CD4-positive, alpha-beta memory T cell (primary cell): ENCODE measurements at regions of chr11 and their contacts with region 1.

Region 1: GRCh38 chr11:64448599-64449556 is 89.9 kb downstream of the RPS6KA4 start:
- DNase-seq: peak; percentile 52 to 68 (median 57)
- H3K4me3 ChIP-seq: peak overlapping the region; percentile 34 to 57
- H3K4me3 Mint-ChIP-seq: peak overlapping the region; percentile 80 to 97 (median 86)
- H3K27ac ChIP-seq: no peak overlapping the region
- H3K27ac Mint-ChIP-seq: peak overlapping the region in 5 of 7 donors; percentile 41 to 75 (median 56)
- H3K4me1 ChIP-seq: peaks cover 18% of the 10 kb centered on the region
- H3K4me1 Mint-ChIP-seq: peaks cover 7 to 18% (median 10%) of the 10 kb centered on the region in 4 donors
- H3K27me3 ChIP-seq: peaks cover 5% of the 10 kb centered on the region
- H3K27me3 Mint-ChIP-seq: peaks cover 6 to 17% of the 10 kb centered on the region in 2 donors

Region 2: DNA sequence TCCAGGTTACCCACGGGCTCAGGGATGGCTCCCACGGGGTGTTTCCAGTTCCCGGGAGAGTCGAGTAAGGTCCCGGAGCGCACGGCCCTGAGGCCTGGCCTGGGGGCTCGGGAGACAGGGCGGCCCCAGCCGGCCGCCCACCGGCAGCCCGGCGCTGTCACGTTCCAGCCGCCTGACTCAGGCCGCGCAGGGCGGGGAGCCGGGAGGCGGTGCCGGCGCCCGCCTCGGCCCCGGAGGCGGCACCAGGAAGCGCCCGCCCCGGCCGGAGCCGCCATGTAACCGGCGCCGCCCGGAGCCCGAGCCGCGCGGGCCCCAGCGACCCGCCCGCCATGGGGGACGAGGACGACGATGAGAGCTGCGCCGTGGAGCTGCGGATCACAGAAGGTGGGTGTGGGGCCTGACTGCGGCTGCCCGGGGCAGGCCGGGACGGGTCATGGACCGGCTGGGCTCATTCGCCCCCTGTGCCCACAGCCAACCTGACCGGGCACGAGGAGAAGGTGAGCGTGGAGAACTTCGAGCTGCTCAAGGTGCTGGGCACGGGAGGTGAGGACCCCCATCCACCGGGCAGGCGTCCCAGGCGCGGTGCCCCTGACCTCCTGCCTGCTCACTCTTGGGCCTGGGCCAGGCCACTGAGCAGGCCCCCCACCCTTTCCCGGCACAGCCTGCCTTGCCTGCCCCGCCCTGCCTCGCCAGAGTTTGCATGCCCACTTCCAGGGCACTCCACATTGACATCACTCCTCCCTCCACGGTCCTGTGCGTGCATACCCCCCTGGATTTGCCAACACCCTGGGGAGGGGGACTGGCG is 89.8 kb before region 1 on chr11 and contains the start of gene RPS6KA4:
- CTCF ChIA-PET with region 1: interaction called, 14 read pairs
- POLR2A ChIA-PET with region 1: interaction called, 4 read pairs
- intact Hi-C with region 1: no loop called
- DNase-seq: peak in 3 of 5 donors; percentile 36 to 53 (median 50)
- H3K4me3 ChIP-seq: peak within 1 kb of the TSS; percentile 47 to 53
- H3K4me3 Mint-ChIP-seq: peak within 1 kb of the TSS; percentile 89 to 96 (median 94)
- H3K27ac ChIP-seq: peak within 1 kb of the TSS; percentile 62
- H3K27ac Mint-ChIP-seq: peak within 1 kb of the TSS; percentile 65 to 95 (median 80)
- H3K4me1 ChIP-seq: peaks cover 30% of the 10 kb centered on the region
- H3K4me1 Mint-ChIP-seq: peaks cover 17 to 45% (median 23%) of the 10 kb centered on the region in 4 donors
- H3K27me3 ChIP-seq: no peaks in the 10 kb centered on the region
- H3K27me3 Mint-ChIP-seq: no peaks in the 10 kb centered on the region
- total RNA-seq, gene RPS6KA4: 33.9 to 38.7 TPM

Region 3: GRCh38 chr11:64436000-64436399 is 12.9 kb before region 1 on chr11:
- CTCF ChIA-PET with region 1: interaction called, 11 read pairs
- POLR2A ChIA-PET with region 1: no interaction called
- intact Hi-C with region 1: no loop called
- DNase-seq: no peak
- H3K4me3 ChIP-seq: no peak overlapping the region
- H3K4me3 Mint-ChIP-seq: no peak overlapping the region
- H3K27ac ChIP-seq: no peak overlapping the region
- H3K27ac Mint-ChIP-seq: no peak overlapping the region
- H3K4me1 ChIP-seq: no peaks in the 10 kb centered on the region
- H3K4me1 Mint-ChIP-seq: no peaks in the 10 kb centered on the region
- H3K27me3 ChIP-seq: no peaks in the 10 kb centered on the region
- H3K27me3 Mint-ChIP-seq: peaks cover 9 to 13% of the 10 kb centered on the region in 2 donors

Region 4: DNA sequence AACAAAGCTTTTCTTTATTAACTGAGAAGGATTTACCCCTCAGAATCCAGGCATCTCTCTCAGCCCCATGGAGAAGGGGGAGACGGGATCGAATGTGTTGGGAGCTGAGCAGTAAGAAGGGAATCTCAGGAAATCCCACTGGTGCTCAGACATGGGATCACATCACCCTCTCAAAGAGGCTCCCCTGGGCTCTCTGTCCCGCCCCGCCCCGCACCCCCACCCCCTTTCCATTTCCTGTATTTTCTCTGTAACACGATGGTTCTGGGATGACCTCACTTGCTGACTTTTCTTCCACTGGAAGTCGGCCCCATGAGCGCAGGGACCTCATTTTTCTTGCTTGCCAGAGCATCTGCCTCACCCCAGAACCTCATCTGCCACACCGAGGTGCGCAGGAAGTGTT is 10.1 kb after region 1 on chr11:
- CTCF ChIA-PET with region 1: interaction called, 20 read pairs
- POLR2A ChIA-PET with region 1: interaction called, 3 read pairs
- intact Hi-C with region 1: no loop called
- DNase-seq: no peak
- H3K4me3 ChIP-seq: no peak overlapping the region
- H3K4me3 Mint-ChIP-seq: no peak overlapping the region
- H3K27ac ChIP-seq: no peak overlapping the region
- H3K27ac Mint-ChIP-seq: no peak overlapping the region
- H3K4me1 ChIP-seq: no peaks in the 10 kb centered on the region
- H3K4me1 Mint-ChIP-seq: no peaks in the 10 kb centered on the region
- H3K27me3 ChIP-seq: no peaks in the 10 kb centered on the region
- H3K27me3 Mint-ChIP-seq: no peaks in the 10 kb centered on the region

Region 5: DNA sequence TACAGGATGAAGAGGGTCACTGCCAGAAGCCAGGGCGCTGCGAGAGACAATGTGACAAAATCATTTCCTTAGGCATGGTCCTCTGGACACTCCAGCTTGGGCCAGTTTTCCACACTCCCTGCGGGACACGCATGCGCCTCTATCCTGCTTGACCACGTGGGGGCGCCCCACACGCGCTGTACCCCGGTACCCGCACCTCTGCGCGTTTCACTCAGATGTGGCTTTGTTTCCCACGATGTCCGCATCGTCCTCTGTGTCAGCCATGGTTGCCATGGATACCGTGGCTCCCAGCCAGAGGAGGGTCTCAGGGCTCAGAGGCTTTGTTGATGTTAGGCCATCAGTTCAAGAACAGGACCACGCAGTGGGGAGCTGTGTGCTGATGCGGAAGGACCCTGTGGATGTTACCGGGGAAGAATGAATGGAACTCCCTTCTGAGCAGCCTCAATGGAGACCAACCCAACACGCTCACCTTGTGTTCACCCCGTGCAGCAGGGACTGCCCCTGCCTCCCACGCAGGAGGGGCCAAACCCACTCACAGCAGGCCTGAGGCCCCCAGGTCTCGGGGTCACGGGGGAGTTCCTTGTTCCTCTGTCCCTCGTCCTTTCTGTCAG is 41.1 kb after region 1 on chr11:
- CTCF ChIA-PET with region 1: interaction called, 12 read pairs
- POLR2A ChIA-PET with region 1: no interaction called
- intact Hi-C with region 1: no loop called
- DNase-seq: peak in 4 of 5 donors; percentile 5 to 31 (median 15)
- H3K4me3 ChIP-seq: no peak overlapping the region
- H3K4me3 Mint-ChIP-seq: peak overlapping the region in 3 of 8 donors; percentile 7 to 63 (median 12)
- H3K27ac ChIP-seq: no peak overlapping the region
- H3K27ac Mint-ChIP-seq: no peak overlapping the region
- H3K4me1 ChIP-seq: peaks cover 9% of the 10 kb centered on the region
- H3K4me1 Mint-ChIP-seq: peaks cover 7 to 19% (median 14%) of the 10 kb centered on the region in 4 donors
- H3K27me3 ChIP-seq: no peaks in the 10 kb centered on the region
- H3K27me3 Mint-ChIP-seq: peaks cover 26 to 49% of the 10 kb centered on the region in 2 donors

Region 6: DNA sequence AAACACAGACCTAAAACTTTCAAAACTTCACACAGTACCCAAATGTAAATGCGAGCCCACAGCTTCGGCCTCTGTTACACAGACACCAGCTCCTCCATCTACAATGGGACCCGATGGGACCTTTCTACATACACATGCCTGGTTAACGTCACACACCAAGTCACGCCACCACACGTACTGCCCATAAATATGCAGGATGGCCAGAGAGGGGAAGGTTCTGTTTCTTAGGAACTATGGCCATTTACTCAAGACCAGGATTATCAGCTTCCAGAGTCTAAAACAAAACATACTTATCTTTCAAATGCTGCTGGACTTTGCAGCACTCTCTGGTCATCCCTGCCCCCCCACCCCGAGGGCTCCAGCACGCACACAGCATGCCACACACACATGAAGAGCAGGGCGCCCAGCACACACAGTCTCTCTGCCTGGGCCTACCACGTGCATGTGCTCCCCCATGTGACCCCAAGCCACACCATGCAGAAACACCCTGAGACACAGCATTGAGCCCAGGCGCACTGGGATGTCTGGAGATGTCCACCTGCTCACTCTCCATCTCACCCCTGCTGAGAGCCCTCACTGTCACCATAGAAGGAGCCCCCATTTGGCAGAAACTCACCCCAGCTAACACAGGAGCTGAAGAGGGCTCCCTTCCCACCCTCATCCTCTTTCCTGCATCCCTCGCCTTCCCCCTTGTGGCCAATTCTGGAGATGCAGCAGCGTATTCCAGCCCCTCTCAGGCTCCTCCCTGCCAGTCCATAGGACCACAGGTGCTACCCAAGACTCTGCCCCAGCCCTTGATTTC is 203.9 kb after region 1 on chr11:
- CTCF ChIA-PET with region 1: interaction called, 5 read pairs
- POLR2A ChIA-PET with region 1: no interaction called
- intact Hi-C with region 1: loop called (anchors 1 kb)
- DNase-seq: peak; percentile 54 to 65 (median 62)
- H3K4me3 ChIP-seq: no peak overlapping the region
- H3K4me3 Mint-ChIP-seq: no peak overlapping the region
- H3K27ac ChIP-seq: no peak overlapping the region
- H3K27ac Mint-ChIP-seq: peak overlapping the region in 2 of 7 donors; percentile 18 to 64
- H3K4me1 ChIP-seq: no peaks in the 10 kb centered on the region
- H3K4me1 Mint-ChIP-seq: peaks cover 0 to 5% (median 2%) of the 10 kb centered on the region in 4 donors
- H3K27me3 ChIP-seq: no peaks in the 10 kb centered on the region
- H3K27me3 Mint-ChIP-seq: peaks cover 6 to 14% of the 10 kb centered on the region in 2 donors